Caco-2 (cell line): ENCODE measurements at regions of chr1 and their contacts with region 1.

Region 1: GRCh38 chr1:25997828-25998761 is at the start of gene PAFAH2:
- DNase-seq: peak; percentile 93 to 96
- H3K4me3 ChIP-seq: peak within 1 kb of the TSS; percentile 57
- H3K4me3 Mint-ChIP-seq: peak within 1 kb of the TSS; percentile 90
- H3K27ac Mint-ChIP-seq: peak within 1 kb of the TSS; percentile 92
- H3K4me1 ChIP-seq: peaks cover 17% of the 10 kb centered on the region
- H3K4me1 Mint-ChIP-seq: peaks cover 17% of the 10 kb centered on the region
- H3K27me3 ChIP-seq: no peaks in the 10 kb centered on the region
- H3K27me3 Mint-ChIP-seq: no peaks in the 10 kb centered on the region
- CTCF ChIP-seq: peak; percentile 78 to 90
- total RNA-seq, gene PAFAH2: 8.0 and 11.1 TPM in 2 replicates

Region 2: DNA sequence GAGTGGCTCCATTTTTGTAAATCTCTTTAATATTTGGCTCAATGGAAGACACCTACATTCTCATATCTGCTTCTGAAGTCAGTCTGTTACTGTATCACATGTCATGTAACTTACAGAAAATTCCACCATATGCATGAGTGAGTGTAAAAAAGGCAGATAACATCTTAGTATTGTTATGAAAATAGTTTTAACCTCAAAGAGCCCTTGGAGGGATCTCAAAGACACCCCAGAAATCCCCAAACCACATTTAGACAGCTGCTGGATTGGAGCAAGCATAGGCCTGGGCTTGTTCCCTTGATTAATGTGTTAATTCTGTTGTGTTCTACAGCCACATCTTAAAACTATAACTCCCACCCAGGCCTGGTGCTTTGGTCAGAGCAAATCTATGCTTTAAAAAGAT is 550.5 kb before region 1 on chr1:
- CTCF ChIA-PET with region 1: no interaction called
- POLR2A ChIA-PET with region 1: no interaction called
- intact Hi-C with region 1: no loop called
- DNase-seq: no peak
- H3K4me3 ChIP-seq: no peak overlapping the region
- H3K4me3 Mint-ChIP-seq: no peak overlapping the region
- H3K27ac Mint-ChIP-seq: no peak overlapping the region
- H3K4me1 ChIP-seq: peaks cover under 1% of the 10 kb centered on the region; the same call in 1 of the 2 replicates
- H3K4me1 Mint-ChIP-seq: no peaks in the 10 kb centered on the region
- H3K27me3 ChIP-seq: no peaks in the 10 kb centered on the region
- H3K27me3 Mint-ChIP-seq: no peaks in the 10 kb centered on the region
- CTCF ChIP-seq: no peak

Region 3: GRCh38 chr1:25819576-25820246 is 178.4 kb before region 1 on chr1 and contains the start of gene MTFR1L:
- CTCF ChIA-PET with region 1: interaction called, 3 read pairs
- POLR2A ChIA-PET with region 1: interaction called, 7 read pairs
- intact Hi-C with region 1: loop called (anchors 5 kb)
- DNase-seq: peak; percentile 89 to 91
- H3K4me3 ChIP-seq: peak within 1 kb of the TSS; percentile 66
- H3K4me3 Mint-ChIP-seq: peak within 1 kb of the TSS; percentile 77
- H3K27ac Mint-ChIP-seq: peak within 1 kb of the TSS; percentile 97
- H3K4me1 ChIP-seq: peaks cover 15% of the 10 kb centered on the region
- H3K4me1 Mint-ChIP-seq: peaks cover 26% of the 10 kb centered on the region
- H3K27me3 ChIP-seq: no peaks in the 10 kb centered on the region
- H3K27me3 Mint-ChIP-seq: no peaks in the 10 kb centered on the region
- CTCF ChIP-seq: no peak
- total RNA-seq, gene MTFR1L: 23.5 and 26.2 TPM in 2 replicates

Region 4: GRCh38 chr1:25837262-25837875 is 160.7 kb before region 1 on chr1:
- CTCF ChIA-PET with region 1: interaction called, 4 read pairs
- POLR2A ChIA-PET with region 1: no interaction called
- intact Hi-C with region 1: loop called (anchors 1 kb)
- DNase-seq: peak in 1 of 2 experiments; percentile 15
- H3K4me3 ChIP-seq: no peak overlapping the region
- H3K4me3 Mint-ChIP-seq: no peak overlapping the region
- H3K27ac Mint-ChIP-seq: peak overlapping the region; percentile 50
- H3K4me1 ChIP-seq: no peaks in the 10 kb centered on the region
- H3K4me1 Mint-ChIP-seq: peaks cover 6% of the 10 kb centered on the region
- H3K27me3 ChIP-seq: no peaks in the 10 kb centered on the region
- H3K27me3 Mint-ChIP-seq: no peaks in the 10 kb centered on the region
- CTCF ChIP-seq: peak; percentile 24 to 60

Region 5: GRCh38 chr1:25895365-25895993 is 102.6 kb before region 1 on chr1:
- CTCF ChIA-PET with region 1: interaction called, 69 read pairs
- POLR2A ChIA-PET with region 1: interaction called, 15 read pairs
- intact Hi-C with region 1: loop called (anchors 1 kb)
- DNase-seq: peak; percentile 85 to 91
- H3K4me3 ChIP-seq: no peak overlapping the region
- H3K4me3 Mint-ChIP-seq: no peak overlapping the region
- H3K27ac Mint-ChIP-seq: no peak overlapping the region
- H3K4me1 ChIP-seq: peaks cover 40% of the 10 kb centered on the region
- H3K4me1 Mint-ChIP-seq: peaks cover 3% of the 10 kb centered on the region
- H3K27me3 ChIP-seq: no peaks in the 10 kb centered on the region
- H3K27me3 Mint-ChIP-seq: no peaks in the 10 kb centered on the region
- CTCF ChIP-seq: peak; percentile 86 to 95

Region 6: DNA sequence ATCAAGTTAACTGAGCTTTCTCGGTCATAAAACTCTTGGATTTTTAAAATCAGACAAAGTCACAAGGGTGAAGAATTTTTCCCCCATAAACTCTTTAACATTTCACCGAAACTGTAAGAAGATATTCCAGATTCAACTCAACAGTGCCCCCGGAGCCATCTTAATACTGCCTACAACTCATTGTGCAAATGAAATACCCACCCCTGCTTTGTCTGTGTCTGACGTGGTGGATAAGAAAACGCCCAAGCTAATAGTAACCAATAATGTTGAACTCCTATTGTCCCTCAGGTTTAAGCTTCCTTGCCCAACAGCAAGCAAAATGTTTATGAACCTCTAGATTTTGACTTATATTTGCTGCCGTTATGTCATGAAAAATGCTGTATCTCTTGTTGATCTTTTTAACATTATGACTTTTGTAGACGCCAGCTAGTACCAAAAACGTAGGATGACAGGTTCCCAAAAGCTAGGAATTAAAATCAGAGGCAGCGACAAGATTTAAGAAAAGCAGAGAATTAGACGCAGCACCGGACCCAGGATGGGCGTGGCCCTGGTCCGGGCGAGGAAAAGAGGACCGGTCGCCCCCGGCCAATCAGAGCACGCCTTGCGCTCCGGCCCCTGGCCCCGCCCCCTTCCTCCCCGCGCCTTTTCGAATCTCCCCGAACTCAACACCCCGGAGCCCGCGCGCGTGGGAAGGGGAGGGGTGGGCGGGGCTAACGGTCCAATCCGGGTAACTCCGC is 93.0 kb before region 1 on chr1:
- CTCF ChIA-PET with region 1: interaction called, 5 read pairs
- POLR2A ChIA-PET with region 1: interaction called, 6 read pairs
- intact Hi-C with region 1: loop called (anchors 1 kb)
- DNase-seq: peak; percentile 90 to 93
- H3K4me3 ChIP-seq: peak overlapping the region; percentile 86
- H3K4me3 Mint-ChIP-seq: peak overlapping the region; percentile 91
- H3K27ac Mint-ChIP-seq: no peak overlapping the region
- H3K4me1 ChIP-seq: no peaks in the 10 kb centered on the region; the same call in 1 of the 2 replicates
- H3K4me1 Mint-ChIP-seq: peaks cover 7% of the 10 kb centered on the region
- H3K27me3 ChIP-seq: no peaks in the 10 kb centered on the region
- H3K27me3 Mint-ChIP-seq: no peaks in the 10 kb centered on the region
- CTCF ChIP-seq: no peak

Region 7: DNA sequence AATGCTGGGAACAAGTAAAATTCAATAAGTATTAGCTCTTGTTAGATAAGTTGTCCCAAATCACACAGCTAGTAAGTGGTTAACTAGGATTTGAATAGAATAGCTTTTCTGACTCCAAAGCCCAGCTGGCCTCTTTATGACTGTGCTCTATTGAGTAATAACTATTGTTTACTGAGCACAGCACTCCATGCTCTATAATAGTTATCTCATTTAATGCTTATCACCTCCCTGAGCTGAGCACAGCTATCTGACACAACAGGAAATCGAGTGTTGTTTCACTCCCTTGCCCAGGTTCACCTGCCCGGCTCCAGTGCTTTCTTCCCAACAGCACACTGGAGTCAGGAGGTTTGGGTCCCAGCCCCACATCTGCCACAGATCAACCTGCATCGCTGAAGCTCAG is 53.1 kb before region 1 on chr1:
- CTCF ChIA-PET with region 1: interaction called, 3 read pairs
- POLR2A ChIA-PET with region 1: no interaction called
- intact Hi-C with region 1: loop called (anchors 10 kb)
- DNase-seq: peak in 1 of 2 experiments; percentile 15
- H3K4me3 ChIP-seq: no peak overlapping the region
- H3K4me3 Mint-ChIP-seq: no peak overlapping the region
- H3K27ac Mint-ChIP-seq: no peak overlapping the region
- H3K4me1 ChIP-seq: peaks cover 4% of the 10 kb centered on the region; the same call in 1 of the 2 replicates
- H3K4me1 Mint-ChIP-seq: no peaks in the 10 kb centered on the region
- H3K27me3 ChIP-seq: no peaks in the 10 kb centered on the region
- H3K27me3 Mint-ChIP-seq: no peaks in the 10 kb centered on the region
- CTCF ChIP-seq: no peak

Region 8: DNA sequence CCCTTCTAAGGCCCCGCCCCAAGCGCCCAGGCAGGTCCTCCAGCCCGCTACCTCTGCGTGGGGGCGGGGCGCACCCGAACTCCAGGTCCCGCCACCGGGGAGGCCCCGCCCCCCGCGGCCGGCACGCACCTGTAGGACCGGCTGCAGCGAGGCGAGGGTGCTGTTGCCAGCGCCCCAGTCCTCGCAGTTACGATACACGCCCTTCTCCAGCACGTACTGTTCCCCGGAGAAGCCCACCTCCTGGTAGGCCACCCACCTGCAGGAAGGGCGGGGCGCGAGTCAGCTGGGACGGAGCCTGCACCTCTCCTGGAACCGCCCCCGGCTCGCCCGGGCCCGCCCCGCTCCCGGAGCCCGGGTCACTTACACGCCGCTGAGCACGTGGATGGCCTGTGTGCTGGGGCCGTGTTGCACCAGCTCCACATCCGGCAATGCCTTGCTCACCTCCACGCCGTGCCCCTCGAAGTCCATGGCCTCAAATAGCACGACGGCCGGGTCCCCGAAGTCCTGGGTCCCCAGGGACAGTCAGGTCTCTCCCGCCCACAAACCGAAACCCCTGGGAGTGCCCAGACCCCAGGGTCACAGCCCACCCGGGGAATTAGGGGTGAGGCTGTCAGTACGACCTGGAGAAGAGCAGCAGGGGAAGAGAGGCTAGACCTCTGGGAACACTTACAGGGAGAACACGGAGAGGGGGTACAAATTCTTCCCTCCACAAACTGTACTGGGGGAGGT is 338.5 kb after region 1 on chr1:
- CTCF ChIA-PET with region 1: no interaction called
- POLR2A ChIA-PET with region 1: no interaction called
- intact Hi-C with region 1: no loop called
- DNase-seq: peak in 1 of 2 experiments; percentile 19
- H3K4me3 ChIP-seq: no peak overlapping the region
- H3K4me3 Mint-ChIP-seq: no peak overlapping the region
- H3K27ac Mint-ChIP-seq: no peak overlapping the region
- H3K4me1 ChIP-seq: no peaks in the 10 kb centered on the region
- H3K4me1 Mint-ChIP-seq: no peaks in the 10 kb centered on the region
- H3K27me3 ChIP-seq: no peaks in the 10 kb centered on the region
- H3K27me3 Mint-ChIP-seq: no peaks in the 10 kb centered on the region
- CTCF ChIP-seq: no peak